WTC11 (cell line): ENCODE measurements at regions of chr5 and their contacts with region 1.

Region 1: GRCh38 chr5:150458819-150459557 is 9.4 kb upstream of the RPS14 start:
- DNase-seq: peak; percentile 91
- ATAC-seq: peak; percentile 67
- H3K4me3 Mint-ChIP-seq: peak overlapping the region; percentile 15; the same call in 1 of the 2 replicates
- H3K27ac Mint-ChIP-seq: no peak overlapping the region
- H3K4me1 Mint-ChIP-seq: peaks cover 43% of the 10 kb centered on the region
- H3K27me3 Mint-ChIP-seq: no peaks in the 10 kb centered on the region
- CTCF ChIP-seq: peak; percentile 87

Region 2: GRCh38 chr5:150278916-150279315 is 180.1 kb before region 1 on chr5:
- CTCF ChIA-PET with region 1: no interaction called
- POLR2A ChIA-PET with region 1: no interaction called
- DNase-seq: no peak
- ATAC-seq: no peak
- H3K4me3 Mint-ChIP-seq: no peak overlapping the region
- H3K27ac Mint-ChIP-seq: no peak overlapping the region
- H3K4me1 Mint-ChIP-seq: peaks cover 2% of the 10 kb centered on the region
- H3K27me3 Mint-ChIP-seq: no peaks in the 10 kb centered on the region
- CTCF ChIP-seq: no peak

Region 3: DNA sequence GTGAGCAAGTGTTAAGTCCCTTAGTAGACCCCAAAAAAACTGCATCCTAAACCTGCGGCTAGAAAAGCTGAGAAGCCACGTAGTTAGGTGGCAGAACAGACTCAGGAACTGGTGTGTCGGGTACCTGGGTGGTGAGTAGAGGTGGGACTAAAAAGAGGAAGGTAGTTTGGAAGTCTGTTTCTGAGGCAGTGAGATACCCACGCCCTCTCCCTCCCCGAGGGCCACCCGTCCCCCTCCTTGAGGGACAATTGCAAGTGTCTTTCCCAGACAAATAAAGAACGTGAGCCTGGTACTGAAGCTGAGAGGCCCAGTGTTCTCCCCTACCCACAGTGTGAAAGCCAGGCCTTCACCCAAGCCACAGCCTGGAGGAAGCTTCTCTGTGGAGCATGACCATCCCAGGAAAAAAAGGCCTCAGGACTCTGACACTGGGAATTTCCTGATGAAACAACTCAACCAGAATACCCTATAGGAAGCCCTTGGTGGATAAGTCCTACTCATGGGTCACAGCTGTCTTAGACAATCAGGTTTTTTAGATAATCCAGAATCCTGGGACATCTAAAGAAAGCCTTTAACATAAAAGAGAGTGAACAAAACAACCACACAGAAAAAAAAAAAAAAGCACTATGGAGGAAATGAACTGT is 39.2 kb before region 1 on chr5:
- CTCF ChIA-PET with region 1: no interaction called
- POLR2A ChIA-PET with region 1: no interaction called
- DNase-seq: no peak
- ATAC-seq: no peak; the same call in 1 of the 2 replicates
- H3K4me3 Mint-ChIP-seq: no peak overlapping the region
- H3K27ac Mint-ChIP-seq: no peak overlapping the region
- H3K4me1 Mint-ChIP-seq: peaks cover 11% of the 10 kb centered on the region
- H3K27me3 Mint-ChIP-seq: no peaks in the 10 kb centered on the region; the same call in 1 of the 2 replicates
- CTCF ChIP-seq: no peak

Region 4: DNA sequence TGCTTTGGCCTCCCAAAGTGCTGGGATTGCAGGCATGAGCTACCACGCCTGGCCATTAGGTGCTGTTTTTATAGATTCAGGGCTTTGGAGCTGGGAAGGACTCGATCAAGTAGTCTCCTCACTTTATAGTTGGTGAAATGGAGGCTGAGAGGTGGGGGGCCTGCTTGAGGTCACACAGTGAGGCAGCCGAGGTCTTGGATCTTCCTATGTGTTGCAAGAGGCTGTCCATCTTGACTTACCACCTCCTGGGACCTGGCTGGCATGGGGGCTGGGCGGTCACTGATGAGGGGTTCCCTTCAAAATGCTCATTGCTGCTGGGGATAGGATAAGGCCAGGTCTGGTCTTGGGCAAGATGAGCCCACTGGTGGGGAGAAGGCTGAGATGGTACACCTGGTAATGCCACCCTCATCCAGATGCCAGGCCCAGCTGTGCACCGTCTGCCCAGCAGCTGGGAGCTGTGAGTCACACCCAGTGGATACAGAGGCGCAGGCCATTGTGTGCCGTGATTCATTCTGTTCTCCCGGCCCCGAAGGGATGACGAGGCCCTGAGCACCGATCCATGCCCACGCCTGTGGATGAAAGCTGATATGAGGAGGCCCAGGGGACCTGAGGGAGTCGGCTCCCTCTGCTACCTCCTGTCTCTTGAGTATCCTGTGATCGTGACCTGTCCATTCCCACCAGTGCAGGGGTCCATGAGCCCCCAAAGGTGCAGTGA is 38.4 kb after region 1 on chr5:
- CTCF ChIA-PET with region 1: interaction called, 12 read pairs
- POLR2A ChIA-PET with region 1: interaction called, 3 read pairs
- DNase-seq: no peak
- ATAC-seq: no peak
- H3K4me3 Mint-ChIP-seq: no peak overlapping the region
- H3K27ac Mint-ChIP-seq: peak overlapping the region; percentile 92
- H3K4me1 Mint-ChIP-seq: peaks cover 64% of the 10 kb centered on the region
- H3K27me3 Mint-ChIP-seq: no peaks in the 10 kb centered on the region
- CTCF ChIP-seq: no peak

Region 5: DNA sequence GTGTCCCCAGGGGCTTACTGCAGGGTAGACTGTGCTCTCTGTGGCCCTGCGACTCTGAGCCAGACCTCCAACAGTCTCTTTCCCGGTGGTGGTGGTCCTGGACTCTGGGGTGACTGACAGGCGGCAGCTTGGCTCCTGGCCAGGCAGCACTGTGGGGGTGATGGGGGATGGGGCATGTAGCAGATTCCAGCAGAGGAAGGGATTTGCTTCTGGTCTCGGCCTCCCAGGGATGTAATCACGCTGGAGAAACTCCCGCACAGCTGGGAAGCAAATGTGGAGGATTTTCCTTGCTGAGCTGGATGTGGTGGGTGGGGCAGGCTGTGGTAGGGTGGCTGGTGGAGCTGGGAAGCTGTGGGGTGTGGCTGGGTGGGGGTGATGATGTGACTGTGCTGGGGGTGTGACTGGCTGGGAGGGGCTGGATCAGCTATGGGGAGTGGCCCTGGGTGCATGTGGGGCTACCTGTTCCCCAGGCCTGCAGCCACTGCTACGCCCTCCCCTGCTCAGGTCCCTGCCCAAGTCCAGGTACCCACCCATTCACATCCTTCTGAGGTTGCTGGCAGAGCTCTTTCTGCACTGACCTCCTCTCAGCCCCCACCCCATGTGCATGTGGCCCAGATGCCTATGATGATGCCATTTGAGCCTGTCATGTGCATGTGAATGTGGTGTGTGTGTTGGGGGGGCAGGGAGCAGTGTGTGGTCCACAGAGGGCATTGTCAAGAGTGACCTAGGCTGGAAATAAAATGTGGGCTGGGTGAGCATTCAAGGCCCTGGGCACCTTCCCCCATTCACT is 52.8 kb after region 1 on chr5:
- CTCF ChIA-PET with region 1: interaction called, 19 read pairs
- POLR2A ChIA-PET with region 1: no interaction called
- DNase-seq: peak; percentile 64
- ATAC-seq: peak; percentile 43
- H3K4me3 Mint-ChIP-seq: peak overlapping the region; percentile 29; the same call in 1 of the 2 replicates
- H3K27ac Mint-ChIP-seq: peak overlapping the region; percentile 79
- H3K4me1 Mint-ChIP-seq: peaks cover 61% of the 10 kb centered on the region
- H3K27me3 Mint-ChIP-seq: no peaks in the 10 kb centered on the region
- CTCF ChIP-seq: no peak

Region 6: DNA sequence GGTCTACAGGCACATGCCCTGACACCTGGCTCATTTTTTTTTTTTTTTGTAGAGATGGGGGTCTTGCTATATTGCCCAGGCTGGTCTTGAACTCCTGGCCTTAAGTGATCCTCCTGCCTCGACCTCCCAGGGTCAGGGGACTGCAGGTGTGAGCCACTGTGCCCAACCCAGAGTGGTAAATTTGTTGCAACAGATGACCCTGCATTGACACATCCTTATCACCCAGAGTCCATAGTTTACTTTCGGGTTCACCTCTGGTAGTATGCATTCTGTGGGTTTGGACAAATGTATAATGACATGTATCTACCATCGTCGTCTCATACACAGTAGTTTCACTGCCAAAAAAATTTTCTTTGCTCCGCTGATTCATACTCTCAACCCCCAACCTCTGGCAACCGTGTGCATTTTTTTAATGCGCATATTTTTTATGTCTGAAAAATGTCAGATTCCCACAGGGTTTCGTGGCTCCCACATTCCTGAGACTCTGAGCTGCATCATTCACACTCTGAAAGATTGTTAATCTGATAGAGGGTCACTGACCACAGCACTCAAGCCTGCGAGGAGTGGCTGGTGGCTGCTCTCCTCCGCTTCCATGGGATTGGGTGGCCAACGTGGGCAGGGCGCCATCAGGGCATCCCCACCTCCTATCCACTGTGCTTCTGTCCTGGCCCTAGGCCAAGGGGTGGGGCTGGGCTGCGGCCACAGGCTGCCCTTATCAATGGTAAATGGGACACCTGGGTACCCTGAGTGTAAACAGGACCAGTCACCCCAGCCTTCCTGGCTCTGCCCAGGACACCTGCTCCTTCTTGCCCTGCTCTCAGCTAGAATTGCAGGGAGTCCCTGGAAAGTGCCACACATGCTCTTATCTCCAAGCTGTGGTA is 58.5 kb after region 1 on chr5:
- CTCF ChIA-PET with region 1: interaction called, 19 read pairs
- POLR2A ChIA-PET with region 1: no interaction called
- DNase-seq: no peak
- ATAC-seq: no peak; the same call in 1 of the 2 replicates
- H3K4me3 Mint-ChIP-seq: no peak overlapping the region
- H3K27ac Mint-ChIP-seq: peak overlapping the region; percentile 78; the same call in 1 of the 2 replicates
- H3K4me1 Mint-ChIP-seq: peaks cover 29% of the 10 kb centered on the region
- H3K27me3 Mint-ChIP-seq: no peaks in the 10 kb centered on the region
- CTCF ChIP-seq: no peak

Region 7: GRCh38 chr5:150529555-150529954 is 70.6 kb after region 1 on chr5:
- CTCF ChIA-PET with region 1: interaction called, 53 read pairs
- POLR2A ChIA-PET with region 1: no interaction called
- DNase-seq: no peak
- ATAC-seq: no peak
- H3K4me3 Mint-ChIP-seq: no peak overlapping the region
- H3K27ac Mint-ChIP-seq: no peak overlapping the region; the same call in 1 of the 2 replicates
- H3K4me1 Mint-ChIP-seq: peaks cover 34% of the 10 kb centered on the region
- H3K27me3 Mint-ChIP-seq: no peaks in the 10 kb centered on the region
- CTCF ChIP-seq: no peak